ENCODE measurements at regions of chr16 and their contacts with region 1.

Region 1: GRCh38 chr16:2926650-2927646 is 15.2 kb downstream of the FLYWCH1 start:
- DNase-seq: peak; percentile 93
- H3K4me3 Mint-ChIP-seq: no peak overlapping the region
- H3K27ac Mint-ChIP-seq: peak overlapping the region; percentile 48
- H3K4me1 Mint-ChIP-seq: peaks cover 12% of the 10 kb centered on the region
- H3K27me3 Mint-ChIP-seq: no peaks in the 10 kb centered on the region
- CTCF ChIP-seq: peak; percentile 87

Region 2: DNA sequence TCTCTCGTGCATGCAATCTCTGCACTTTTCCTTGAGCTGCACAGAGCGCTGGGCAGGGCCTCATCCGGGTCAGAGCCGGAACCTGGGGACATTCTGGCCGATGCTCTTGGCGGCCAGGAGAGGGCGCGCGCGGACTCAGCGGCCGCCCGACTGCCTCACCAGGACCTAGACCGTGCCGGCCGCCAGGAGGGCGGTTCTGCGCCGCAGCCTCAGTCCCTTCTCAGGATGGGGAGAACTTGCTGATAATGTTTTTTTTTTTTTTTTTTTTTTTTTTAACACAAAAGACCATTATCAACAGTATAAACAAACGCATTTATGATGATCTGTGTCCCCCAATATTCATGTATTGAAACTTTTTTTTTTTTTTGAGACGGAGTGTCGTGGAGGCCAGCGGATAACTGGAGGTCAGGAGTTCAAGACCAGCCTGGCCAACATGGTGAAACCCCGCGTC is 52.0 kb before region 1 on chr16:
- CTCF ChIA-PET with region 1: interaction called, 20 read pairs
- POLR2A ChIA-PET with region 1: interaction called, 3 read pairs
- intact Hi-C with region 1: loop called (anchors 2 kb)
- DNase-seq: peak; percentile 77
- H3K4me3 Mint-ChIP-seq: no peak overlapping the region
- H3K27ac Mint-ChIP-seq: no peak overlapping the region
- H3K4me1 Mint-ChIP-seq: no peaks in the 10 kb centered on the region
- H3K27me3 Mint-ChIP-seq: no peaks in the 10 kb centered on the region
- CTCF ChIP-seq: peak; percentile 94

Region 3: GRCh38 chr16:2905431-2906387 is 21.2 kb before region 1 on chr16:
- CTCF ChIA-PET with region 1: interaction called, 22 read pairs
- POLR2A ChIA-PET with region 1: interaction called, 5 read pairs
- intact Hi-C with region 1: loop called (anchors 2 kb)
- DNase-seq: peak; percentile 99
- H3K4me3 Mint-ChIP-seq: peak overlapping the region; percentile 84
- H3K27ac Mint-ChIP-seq: peak overlapping the region; percentile 91
- H3K4me1 Mint-ChIP-seq: peaks cover 17% of the 10 kb centered on the region
- H3K27me3 Mint-ChIP-seq: no peaks in the 10 kb centered on the region
- CTCF ChIP-seq: no peak

Region 4: GRCh38 chr16:2911580-2912329 is 15.2 kb before region 1 on chr16 and contains the start of gene FLYWCH1:
- CTCF ChIA-PET with region 1: interaction called, 26 read pairs
- POLR2A ChIA-PET with region 1: interaction called, 6 read pairs
- intact Hi-C with region 1: no loop called
- DNase-seq: peak; percentile 97
- H3K4me3 Mint-ChIP-seq: peak within 1 kb of the TSS; percentile 74
- H3K27ac Mint-ChIP-seq: peak within 1 kb of the TSS; percentile 81
- H3K4me1 Mint-ChIP-seq: peaks cover 19% of the 10 kb centered on the region
- H3K27me3 Mint-ChIP-seq: no peaks in the 10 kb centered on the region
- CTCF ChIP-seq: no peak
- total RNA-seq, gene FLYWCH1: 76.3 and 86.2 TPM in 2 replicates

Region 5: GRCh38 chr16:2952679-2953078 is 25.7 kb after region 1 on chr16:
- CTCF ChIA-PET with region 1: interaction called, 10 read pairs
- POLR2A ChIA-PET with region 1: interaction called, 3 read pairs
- intact Hi-C with region 1: no loop called
- DNase-seq: no peak
- H3K4me3 Mint-ChIP-seq: no peak overlapping the region
- H3K27ac Mint-ChIP-seq: no peak overlapping the region
- H3K4me1 Mint-ChIP-seq: peaks cover 4% of the 10 kb centered on the region
- H3K27me3 Mint-ChIP-seq: peaks cover 10% of the 10 kb centered on the region
- CTCF ChIP-seq: no peak

Region 6: GRCh38 chr16:2980227-2981086 is 53.5 kb after region 1 on chr16 and contains the start of gene PKMYT1:
- CTCF ChIA-PET with region 1: interaction called, 4 read pairs
- POLR2A ChIA-PET with region 1: no interaction called
- intact Hi-C with region 1: loop called (anchors 5 kb)
- DNase-seq: peak; percentile 87
- H3K4me3 Mint-ChIP-seq: peak within 1 kb of the TSS; percentile 73
- H3K27ac Mint-ChIP-seq: no peak within 1 kb of the TSS
- H3K4me1 Mint-ChIP-seq: peaks cover 6% of the 10 kb centered on the region
- H3K27me3 Mint-ChIP-seq: no peaks in the 10 kb centered on the region
- CTCF ChIP-seq: no peak
- total RNA-seq, gene PKMYT1: 16.9 and 34.7 TPM in 2 replicates

Region 7: DNA sequence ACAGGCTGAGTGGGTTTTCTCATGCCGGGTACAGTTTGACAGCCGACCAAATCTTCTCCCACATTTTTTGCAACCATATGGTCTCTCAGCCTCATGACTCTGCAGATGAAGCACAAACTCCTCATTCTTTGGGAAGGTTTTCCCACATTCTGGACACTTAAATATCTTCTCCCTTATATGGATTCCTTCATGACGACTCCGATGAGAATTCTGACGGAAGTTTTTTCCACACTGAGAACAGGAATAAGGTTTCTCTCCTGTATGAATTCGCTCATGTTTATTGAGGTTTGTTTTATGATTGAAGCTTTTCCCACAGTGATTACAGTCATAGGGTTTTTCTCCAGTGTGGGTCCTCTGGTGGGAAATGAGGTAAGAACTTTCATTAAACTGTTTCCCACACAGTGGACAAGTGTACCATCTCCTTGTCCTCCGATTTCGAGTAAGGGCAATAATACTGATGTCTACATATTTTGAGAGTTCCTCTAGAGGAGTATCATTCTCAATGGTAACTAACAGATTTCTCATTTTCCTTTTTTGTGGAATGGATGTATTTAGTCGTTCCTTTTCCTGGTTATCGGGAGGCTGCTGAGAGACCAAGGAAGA is 297.1 kb after region 1 on chr16:
- CTCF ChIA-PET with region 1: no interaction called
- POLR2A ChIA-PET with region 1: no interaction called
- intact Hi-C with region 1: no loop called
- DNase-seq: no peak
- H3K4me3 Mint-ChIP-seq: no peak overlapping the region
- H3K27ac Mint-ChIP-seq: no peak overlapping the region
- H3K4me1 Mint-ChIP-seq: no peaks in the 10 kb centered on the region
- H3K27me3 Mint-ChIP-seq: no peaks in the 10 kb centered on the region
- CTCF ChIP-seq: no peak

Measured in MCF 10A (cell line).